GM10248 (cell line): ENCODE measurements at regions of chr1 and their contacts with region 1.

Region 1: DNA sequence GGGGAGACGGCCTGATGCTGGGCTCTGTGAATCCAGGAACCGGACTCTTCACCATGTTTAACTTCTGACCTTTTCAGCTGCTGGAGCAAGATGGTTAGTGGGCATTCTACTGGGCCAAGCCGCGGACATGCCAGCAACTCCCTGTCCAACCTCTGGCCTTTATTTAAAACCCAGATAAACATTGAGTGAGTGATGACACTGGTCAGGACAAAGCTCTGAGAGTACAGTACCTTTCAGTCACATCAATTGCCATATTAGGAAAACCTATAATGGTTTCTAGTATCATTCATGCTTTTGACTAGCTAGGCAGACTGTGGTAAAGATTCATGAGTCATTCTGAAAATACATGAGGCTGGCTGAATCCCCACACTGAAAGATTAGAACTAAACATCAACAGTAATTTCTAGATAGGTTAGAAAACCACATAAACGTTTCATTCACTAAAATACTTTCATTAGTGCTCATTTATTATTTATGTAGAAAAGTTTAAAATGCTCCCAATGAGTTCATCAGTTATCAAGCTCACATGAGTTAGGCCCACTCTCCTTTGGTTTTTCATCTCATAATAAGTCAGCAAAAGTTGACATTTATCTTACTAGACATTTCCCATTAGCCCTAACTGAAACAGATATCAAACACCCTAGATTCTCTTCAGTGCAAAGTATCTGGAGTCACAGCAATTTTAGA is 7.1 kb upstream of the ACTA1 start:
- DNase-seq: peak; percentile 79
- CTCF ChIP-seq: no peak

Region 2: DNA sequence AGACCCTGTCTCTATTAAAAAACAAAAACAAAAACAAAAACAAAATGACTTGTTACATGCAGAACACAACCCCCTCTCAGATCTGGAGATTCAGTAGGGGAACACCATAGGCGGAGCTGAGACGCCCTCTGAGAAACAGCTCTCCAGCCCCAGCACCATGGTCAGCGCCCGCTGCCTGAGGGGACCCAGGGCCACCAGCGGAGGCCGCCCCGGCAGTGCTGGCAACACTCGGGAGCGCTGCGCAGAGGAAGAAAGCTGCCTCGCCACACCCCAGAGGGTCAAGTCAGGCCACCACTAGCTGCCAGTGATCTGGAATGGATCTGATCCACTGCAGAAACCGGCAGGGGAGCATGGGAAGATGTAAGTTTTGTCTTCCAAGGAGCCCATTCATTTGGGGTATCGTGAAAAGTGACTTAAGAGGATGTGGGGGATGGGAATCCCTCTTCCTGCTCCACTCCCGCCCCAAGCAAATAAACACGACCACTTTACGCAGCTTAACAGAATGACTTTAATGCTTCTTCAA is 10.2 kb before region 1 on chr1:
- CTCF ChIA-PET with region 1: interaction called, 12 read pairs
- POLR2A ChIA-PET with region 1: no interaction called
- DNase-seq: no peak
- CTCF ChIP-seq: no peak

Region 3: GRCh38 chr1:229495782-229496181 is 54.8 kb after region 1 on chr1:
- CTCF ChIA-PET with region 1: no interaction called
- POLR2A ChIA-PET with region 1: no interaction called
- DNase-seq: no peak
- CTCF ChIP-seq: no peak